HAP-1 (cell line): ENCODE measurements at regions of chr5 and their contacts with region 1.

Region 1: DNA sequence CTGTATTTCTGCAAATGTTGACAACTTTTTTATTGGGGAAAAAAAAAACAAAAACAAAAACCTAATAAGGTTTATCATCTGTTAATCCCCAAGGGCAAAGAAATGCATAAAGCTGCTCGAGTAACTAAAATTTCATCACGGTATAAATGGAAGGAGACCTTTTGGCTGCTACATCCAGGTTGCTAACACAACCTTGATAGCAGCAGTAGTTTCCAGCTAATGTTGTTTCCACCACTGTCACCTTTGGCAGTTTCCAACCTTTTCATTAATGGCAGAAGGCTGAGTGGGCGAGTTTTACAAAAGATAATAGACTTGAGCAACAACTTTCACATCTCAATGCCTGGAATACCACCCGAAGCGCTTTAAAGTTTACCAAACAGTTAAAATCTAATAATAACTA is 8.5 kb downstream of the PAIP1 start:
- DNase-seq: no peak
- H3K4me3 ChIP-seq: no peak overlapping the region
- H3K4me1 ChIP-seq: peaks cover 17% of the 10 kb centered on the region
- H3K27me3 ChIP-seq: no peaks in the 10 kb centered on the region

Region 2: DNA sequence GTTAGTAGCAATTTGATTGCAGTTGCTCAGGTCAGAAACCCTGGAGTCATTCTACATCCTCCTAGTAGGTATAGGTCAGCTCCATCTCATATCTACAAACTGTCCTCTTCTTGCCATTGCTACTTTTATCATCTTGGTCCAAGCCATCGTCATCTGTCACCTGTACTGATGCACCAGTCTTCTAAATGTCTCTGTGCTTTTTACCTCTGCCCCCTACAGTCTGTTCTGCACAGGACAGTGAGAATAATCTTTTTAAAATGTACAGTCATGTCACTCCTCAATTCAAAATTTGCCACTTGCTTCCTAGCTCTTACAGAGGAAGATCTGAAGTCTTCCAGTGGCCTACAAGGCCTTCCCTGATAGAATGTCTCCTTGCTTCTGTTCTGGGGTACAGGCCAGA is 61.4 kb after region 1 on chr5:
- in situ Hi-C with region 1: loop called (anchors 5 kb)
- DNase-seq: no peak
- H3K4me3 ChIP-seq: no peak overlapping the region
- H3K4me1 ChIP-seq: peaks cover 2% of the 10 kb centered on the region
- H3K27me3 ChIP-seq: no peaks in the 10 kb centered on the region